CD4-positive, alpha-beta T cell (primary cell): ENCODE measurements at regions of chr16 and their contacts with region 1.

Region 1: GRCh38 chr16:89363621-89364393 is 126.6 kb downstream of the ANKRD11 start:
- DNase-seq: peak in 12 of 14 experiments; percentile 25 to 77 (median 42)
- ATAC-seq: peak; percentile 21
- H3K4me3 ChIP-seq: no peak overlapping the region
- H3K4me3 Mint-ChIP-seq: peak overlapping the region; percentile 25
- H3K27ac ChIP-seq: peak overlapping the region in 1 of 2 donors; percentile 23
- H3K27ac Mint-ChIP-seq: peak overlapping the region; percentile 75
- H3K4me1 ChIP-seq: peaks cover 94% of the 10 kb centered on the region
- H3K4me1 Mint-ChIP-seq: peaks cover 96% of the 10 kb centered on the region
- H3K27me3 ChIP-seq: no peaks in the 10 kb centered on the region
- H3K27me3 Mint-ChIP-seq: no peaks in the 10 kb centered on the region
- CTCF ChIP-seq: no peak

Region 2: DNA sequence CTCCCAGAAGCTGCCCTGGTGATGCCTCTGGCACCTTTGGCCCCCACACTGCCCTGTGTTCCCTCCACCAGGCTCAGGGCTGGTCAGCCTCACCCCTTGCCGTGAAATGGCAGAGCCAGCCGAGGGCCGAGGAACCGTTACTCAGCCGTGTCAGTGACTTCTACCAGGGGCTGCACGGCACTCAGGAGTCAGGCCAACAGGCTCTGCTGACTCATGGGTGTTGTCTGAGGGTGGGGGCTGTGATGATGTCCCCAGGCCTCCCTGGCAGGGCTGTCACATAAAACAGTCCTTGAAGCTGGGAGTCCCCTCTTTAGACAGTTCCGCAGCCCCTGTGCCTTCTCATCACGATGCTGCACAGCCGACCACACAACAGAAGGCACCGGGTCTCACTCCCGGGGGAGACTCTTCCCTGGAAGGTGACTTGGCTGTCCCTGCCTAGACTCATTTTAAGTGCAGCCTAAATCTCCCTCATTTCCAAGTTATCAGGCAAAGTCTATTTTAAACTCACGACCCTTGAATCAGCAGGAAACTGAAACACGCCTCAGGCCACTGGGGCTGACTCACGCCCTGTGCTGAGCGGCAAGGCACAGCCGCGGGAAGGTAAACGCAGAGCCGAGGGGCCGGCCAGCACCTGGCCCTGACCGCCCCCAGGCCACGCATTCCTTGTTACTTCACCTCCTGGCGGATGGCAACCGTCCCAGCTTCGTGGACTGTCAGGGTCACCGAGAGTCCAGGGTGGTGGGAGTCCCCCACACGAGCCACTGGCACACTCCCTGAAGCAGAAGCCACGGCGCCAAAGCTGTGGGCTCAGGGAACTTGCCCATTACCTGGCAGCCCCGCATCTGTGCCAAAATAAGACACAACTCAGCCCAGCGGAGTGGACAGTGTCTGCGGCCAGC is 43.7 kb before region 1 on chr16:
- CTCF ChIA-PET with region 1: no interaction called
- POLR2A ChIA-PET with region 1: interaction called, 11 read pairs
- intact Hi-C with region 1: loop called in 1 of 2 experiments (anchors 5 kb)
- DNase-seq: peak in 5 of 14 experiments; percentile 21 to 55 (median 45)
- ATAC-seq: no peak
- H3K4me3 ChIP-seq: no peak overlapping the region
- H3K4me3 Mint-ChIP-seq: peak overlapping the region; percentile 38
- H3K27ac ChIP-seq: no peak overlapping the region
- H3K27ac Mint-ChIP-seq: peak overlapping the region; percentile 98
- H3K4me1 ChIP-seq: peaks cover 100% of the 10 kb centered on the region
- H3K4me1 Mint-ChIP-seq: peaks cover 91% of the 10 kb centered on the region
- H3K27me3 ChIP-seq: no peaks in the 10 kb centered on the region
- H3K27me3 Mint-ChIP-seq: no peaks in the 10 kb centered on the region
- CTCF ChIP-seq: no peak

Region 3: DNA sequence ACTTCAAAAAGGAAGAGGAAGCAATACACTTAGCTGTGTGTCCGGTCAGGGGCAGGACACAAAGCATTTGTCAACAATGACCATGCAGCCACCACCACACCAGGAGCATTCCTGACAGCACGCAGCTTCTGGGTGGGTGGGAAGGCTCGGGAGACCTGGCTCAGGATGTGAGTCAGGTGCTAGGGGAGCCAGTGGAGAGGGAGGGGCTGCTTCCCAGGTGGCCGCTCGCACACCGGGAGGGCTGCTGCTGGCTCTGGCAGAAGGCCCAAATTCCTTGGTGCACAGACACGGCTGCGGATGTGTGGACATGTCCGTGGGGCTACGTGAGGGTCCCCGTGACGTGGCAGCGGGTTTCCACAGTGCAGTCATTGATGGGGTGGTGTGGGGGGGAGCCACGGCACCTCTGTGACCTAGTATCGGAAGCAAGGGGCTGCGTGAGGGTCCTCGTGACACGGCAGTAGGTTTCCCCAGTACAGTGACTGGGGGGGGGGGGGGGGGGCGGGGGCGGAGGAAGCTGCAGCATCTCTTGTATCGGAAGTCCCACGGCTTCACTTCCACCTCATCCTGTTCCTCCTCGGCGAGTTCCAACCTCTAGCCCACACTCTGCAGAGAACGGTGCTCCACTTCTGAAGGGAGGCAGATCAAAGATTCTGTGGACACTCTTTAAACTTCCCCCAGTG is 33.5 kb before region 1 on chr16:
- CTCF ChIA-PET with region 1: no interaction called
- POLR2A ChIA-PET with region 1: no interaction called
- intact Hi-C with region 1: loop called in 1 of 2 experiments (anchors 5 kb)
- DNase-seq: peak in 6 of 14 experiments; percentile 32 to 84 (median 72)
- ATAC-seq: peak; percentile 67
- H3K4me3 ChIP-seq: peak overlapping the region; percentile 13
- H3K4me3 Mint-ChIP-seq: peak overlapping the region; percentile 10
- H3K27ac ChIP-seq: peak overlapping the region; percentile 60 to 67
- H3K27ac Mint-ChIP-seq: peak overlapping the region; percentile 80
- H3K4me1 ChIP-seq: peaks cover 82% of the 10 kb centered on the region
- H3K4me1 Mint-ChIP-seq: peaks cover 84% of the 10 kb centered on the region
- H3K27me3 ChIP-seq: no peaks in the 10 kb centered on the region
- H3K27me3 Mint-ChIP-seq: no peaks in the 10 kb centered on the region
- CTCF ChIP-seq: no peak

Region 4: GRCh38 chr16:89343501-89344457 is 20.0 kb before region 1 on chr16:
- CTCF ChIA-PET with region 1: no interaction called
- POLR2A ChIA-PET with region 1: no interaction called
- intact Hi-C with region 1: no loop called
- DNase-seq: peak in 1 of 14 experiments; percentile 2
- ATAC-seq: no peak
- H3K4me3 ChIP-seq: no peak overlapping the region
- H3K4me3 Mint-ChIP-seq: no peak overlapping the region
- H3K27ac ChIP-seq: no peak overlapping the region
- H3K27ac Mint-ChIP-seq: peak overlapping the region; percentile 61
- H3K4me1 ChIP-seq: peaks cover 77% of the 10 kb centered on the region
- H3K4me1 Mint-ChIP-seq: peaks cover 86% of the 10 kb centered on the region
- H3K27me3 ChIP-seq: no peaks in the 10 kb centered on the region
- H3K27me3 Mint-ChIP-seq: no peaks in the 10 kb centered on the region
- CTCF ChIP-seq: no peak

Region 5: DNA sequence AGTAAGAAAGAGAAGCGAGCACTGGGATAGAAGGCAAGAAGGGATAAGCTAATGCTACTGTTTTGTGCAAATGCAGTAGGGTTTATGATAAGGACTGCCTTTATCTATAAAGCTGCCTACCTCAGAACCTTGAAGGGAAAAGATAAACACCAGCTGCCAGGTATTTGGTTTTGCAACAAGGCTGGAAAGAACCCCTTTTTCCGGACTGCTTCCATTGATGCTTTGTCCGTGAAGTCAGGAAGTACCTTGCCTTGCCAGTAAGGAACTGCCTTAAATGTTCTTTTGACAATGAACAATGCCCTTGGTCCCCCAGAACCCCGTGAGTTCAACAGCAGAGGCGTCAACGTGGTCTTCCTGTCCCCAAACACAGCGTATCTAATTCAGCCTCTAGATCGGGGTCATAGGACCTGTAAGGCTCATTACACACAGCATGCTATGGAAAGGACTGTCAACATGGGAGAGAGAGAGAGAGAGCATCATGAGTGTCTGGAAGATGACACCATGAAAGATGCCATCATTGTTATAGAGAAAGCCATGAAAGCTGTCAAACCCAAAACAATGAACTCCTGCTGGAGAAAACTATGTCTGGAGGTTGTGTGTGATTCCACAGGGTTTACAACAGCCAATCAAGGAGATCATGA is 13.1 kb after region 1 on chr16:
- CTCF ChIA-PET with region 1: interaction called, 3 read pairs
- POLR2A ChIA-PET with region 1: interaction called, 7 read pairs
- intact Hi-C with region 1: loop called in 1 of 2 experiments (anchors 2 kb)
- DNase-seq: no peak
- ATAC-seq: no peak
- H3K4me3 ChIP-seq: no peak overlapping the region
- H3K4me3 Mint-ChIP-seq: peak overlapping the region; percentile 34
- H3K27ac ChIP-seq: no peak overlapping the region
- H3K27ac Mint-ChIP-seq: peak overlapping the region; percentile 58
- H3K4me1 ChIP-seq: peaks cover 68% of the 10 kb centered on the region
- H3K4me1 Mint-ChIP-seq: peaks cover 88% of the 10 kb centered on the region
- H3K27me3 ChIP-seq: no peaks in the 10 kb centered on the region
- H3K27me3 Mint-ChIP-seq: no peaks in the 10 kb centered on the region
- CTCF ChIP-seq: no peak

Region 6: DNA sequence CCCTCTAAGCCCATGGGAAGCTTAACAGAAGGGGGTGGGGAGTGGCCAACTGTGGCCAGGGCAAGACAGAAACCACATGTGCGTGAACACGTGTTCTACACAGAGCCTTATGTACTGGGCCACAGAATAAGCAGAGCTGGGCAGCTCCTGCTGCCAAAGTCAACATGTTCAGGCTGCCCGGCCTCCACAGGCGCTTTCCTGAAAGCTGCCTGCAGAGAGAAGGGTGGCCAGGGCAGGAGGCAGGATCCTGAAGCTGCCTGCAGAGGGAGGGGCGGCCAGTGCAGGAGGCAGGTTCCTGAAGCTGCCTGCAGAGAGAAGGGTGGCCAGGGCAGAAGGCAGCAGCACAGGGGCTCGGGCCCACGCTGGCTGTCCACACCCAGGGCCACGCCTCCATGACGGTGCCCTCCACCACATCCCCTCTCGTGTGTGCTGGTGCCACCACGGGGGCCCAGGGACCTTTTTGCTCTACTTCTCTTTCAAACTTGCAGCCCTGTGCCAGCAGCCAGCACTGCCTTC is 47.0 kb after region 1 on chr16:
- CTCF ChIA-PET with region 1: no interaction called
- POLR2A ChIA-PET with region 1: interaction called, 3 read pairs
- intact Hi-C with region 1: loop called (anchors 5 kb)
- DNase-seq: peak in 5 of 14 experiments; percentile 28 to 54 (median 34)
- ATAC-seq: no peak
- H3K4me3 ChIP-seq: no peak overlapping the region
- H3K4me3 Mint-ChIP-seq: peak overlapping the region; percentile 54
- H3K27ac ChIP-seq: peak overlapping the region; percentile 34 to 69
- H3K27ac Mint-ChIP-seq: peak overlapping the region; percentile 95
- H3K4me1 ChIP-seq: peaks cover 92% of the 10 kb centered on the region
- H3K4me1 Mint-ChIP-seq: peaks cover 87% of the 10 kb centered on the region
- H3K27me3 ChIP-seq: no peaks in the 10 kb centered on the region
- H3K27me3 Mint-ChIP-seq: no peaks in the 10 kb centered on the region
- CTCF ChIP-seq: no peak

Region 7: GRCh38 chr16:89417352-89417751 is 53.5 kb after region 1 on chr16:
- CTCF ChIA-PET with region 1: no interaction called
- POLR2A ChIA-PET with region 1: no interaction called
- intact Hi-C with region 1: loop called in 1 of 2 experiments (anchors 5 kb)
- DNase-seq: no peak
- ATAC-seq: no peak
- H3K4me3 ChIP-seq: no peak overlapping the region
- H3K4me3 Mint-ChIP-seq: peak overlapping the region; percentile 7
- H3K27ac ChIP-seq: no peak overlapping the region
- H3K27ac Mint-ChIP-seq: peak overlapping the region; percentile 69
- H3K4me1 ChIP-seq: peaks cover 81% of the 10 kb centered on the region
- H3K4me1 Mint-ChIP-seq: peaks cover 79% of the 10 kb centered on the region
- H3K27me3 ChIP-seq: no peaks in the 10 kb centered on the region
- H3K27me3 Mint-ChIP-seq: no peaks in the 10 kb centered on the region
- CTCF ChIP-seq: no peak